ENCODE measurements at regions of chr19 and their contacts with region 1.

Region 1: GRCh38 chr19:39125554-39126311 is at the start of gene PAK4:
- DNase-seq: peak; percentile 98
- H3K4me3 ChIP-seq: peak within 1 kb of the TSS; percentile 80 to 95 (median 91)
- H3K27ac ChIP-seq: peak within 1 kb of the TSS; percentile 90 to 93
- H3K4me1 ChIP-seq: peaks cover 14 to 41% of the 10 kb centered on the region in 2 donors
- H3K27me3 ChIP-seq: no peaks in the 10 kb centered on the region
- CTCF ChIP-seq: no peak
- POLR2A ChIP-seq: peak; percentile 77
- total RNA-seq, gene PAK4: 3.5 to 12.0 (median 10.2) TPM

Region 2: DNA sequence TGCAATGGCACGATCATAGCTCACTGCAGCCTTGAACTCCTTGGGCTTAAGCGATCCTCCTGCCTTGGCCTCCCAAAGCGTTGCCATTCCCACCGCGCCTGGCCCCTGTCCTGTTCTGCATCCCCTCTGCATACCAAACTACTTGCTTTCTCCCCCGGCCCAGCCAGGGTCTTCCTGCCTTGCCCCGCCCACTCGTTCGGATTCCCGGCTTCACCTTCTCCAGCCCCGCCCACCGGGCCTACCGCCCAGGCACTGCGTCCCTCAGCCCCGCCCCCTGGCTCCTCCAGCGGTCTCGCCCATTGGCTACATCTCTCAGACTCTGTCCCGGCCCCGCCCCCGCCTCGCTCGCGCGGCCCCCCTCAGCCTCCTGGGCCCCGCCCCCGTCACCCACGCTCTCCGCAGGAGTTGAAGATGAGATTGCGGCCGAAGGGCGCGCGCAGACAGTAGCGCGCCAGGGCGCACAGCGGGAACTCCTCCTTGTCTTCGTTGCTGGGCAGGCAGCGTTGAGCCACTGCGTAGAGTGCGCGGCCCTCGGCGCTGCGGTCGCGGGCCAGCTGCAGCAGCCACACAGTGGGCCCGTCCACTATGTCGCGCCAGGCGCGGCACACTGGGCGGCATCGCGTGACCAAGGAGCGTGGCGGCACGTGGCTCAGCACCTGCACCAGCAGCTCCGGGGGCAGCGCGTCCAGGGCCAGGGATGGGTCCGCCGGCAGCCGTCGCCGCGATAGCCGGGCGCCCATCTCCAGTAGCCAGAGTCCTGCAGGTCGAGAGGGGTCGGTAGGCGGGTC is 176.0 kb before region 1 on chr19:
- intact Hi-C with region 1: loop called (anchors 5 kb)
- DNase-seq: peak; percentile 84 to 87
- H3K4me3 ChIP-seq: peak overlapping the region; percentile 2 to 64 (median 47)
- H3K27ac ChIP-seq: no peak overlapping the region
- H3K4me1 ChIP-seq: no peaks in the 10 kb centered on the region
- H3K27me3 ChIP-seq: no peaks in the 10 kb centered on the region
- CTCF ChIP-seq: no peak
- POLR2A ChIP-seq: no peak

Region 3: GRCh38 chr19:39052243-39052746 is 73.4 kb before region 1 on chr19:
- intact Hi-C with region 1: no loop called
- DNase-seq: peak in 1 of 2 donors; percentile 57
- H3K4me3 ChIP-seq: no peak overlapping the region
- H3K27ac ChIP-seq: no peak overlapping the region
- H3K4me1 ChIP-seq: no peaks in the 10 kb centered on the region
- H3K27me3 ChIP-seq: no peaks in the 10 kb centered on the region
- CTCF ChIP-seq: peak; percentile 15 to 54 (median 51)
- POLR2A ChIP-seq: no peak

Region 4: GRCh38 chr19:39328046-39328705 is 202.4 kb after region 1 on chr19:
- intact Hi-C with region 1: loop called (anchors 10 kb)
- DNase-seq: peak; percentile 80 to 90
- H3K4me3 ChIP-seq: no peak overlapping the region
- H3K27ac ChIP-seq: no peak overlapping the region
- H3K4me1 ChIP-seq: no peaks in the 10 kb centered on the region
- H3K27me3 ChIP-seq: no peaks in the 10 kb centered on the region
- CTCF ChIP-seq: peak; percentile 92 to 96 (median 95)
- POLR2A ChIP-seq: no peak

Measured in breast epithelium (tissue), 4 donors.